ENCODE measurements at regions of chr3 and their contacts with region 1.

Region 1: DNA sequence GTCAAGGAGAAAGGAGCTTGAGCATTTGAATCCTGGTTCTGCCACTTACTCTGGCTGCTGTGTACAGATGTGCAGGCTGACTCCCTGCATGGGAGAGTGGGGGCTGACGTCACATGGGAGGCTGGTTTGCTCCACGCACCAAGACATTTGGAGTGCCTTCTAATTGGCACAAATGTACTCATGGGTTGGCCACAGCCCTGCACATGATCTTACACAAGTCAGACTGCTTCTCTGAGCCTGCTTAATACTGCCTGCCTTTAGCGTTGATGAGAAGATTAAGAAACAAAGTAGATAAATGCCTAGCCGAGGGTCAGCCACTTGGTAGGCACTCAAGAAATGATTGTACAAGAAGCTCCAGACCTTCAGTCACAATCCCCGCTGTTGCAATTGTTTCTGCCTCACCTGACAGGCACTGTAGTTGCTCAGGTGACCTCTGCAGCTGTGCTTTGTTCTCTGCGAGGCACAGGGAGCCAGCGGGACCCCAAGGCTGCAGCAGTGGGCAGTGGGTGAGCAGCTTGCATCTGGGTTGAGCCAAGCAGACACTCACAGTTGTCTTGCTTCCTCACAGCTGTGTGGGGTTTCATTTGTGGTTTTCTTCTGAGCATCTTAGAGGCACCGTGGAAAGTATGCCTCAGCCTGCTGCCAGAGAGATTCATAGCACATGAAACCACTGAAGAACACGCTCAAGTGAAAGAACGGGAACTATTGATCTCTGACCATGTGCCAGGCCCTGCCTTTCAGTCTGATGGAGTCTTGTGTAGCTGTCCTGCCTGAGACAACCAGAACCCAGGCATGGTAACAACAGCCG is 33.1 kb downstream of the GRK7 start:
- DNase-seq: peak; percentile 83
- H3K4me3 ChIP-seq: peak overlapping the region in 4 of 8 donors; percentile 7 to 68 (median 45)
- H3K27ac ChIP-seq: peak overlapping the region; percentile 78 to 91 (median 87)
- H3K4me1 ChIP-seq: peaks cover 18 to 52% (median 30%) of the 10 kb centered on the region in 6 donors
- H3K27me3 ChIP-seq: no peaks in the 10 kb centered on the region
- CTCF ChIP-seq: no peak
- POLR2A ChIP-seq: no peak

Region 2: DNA sequence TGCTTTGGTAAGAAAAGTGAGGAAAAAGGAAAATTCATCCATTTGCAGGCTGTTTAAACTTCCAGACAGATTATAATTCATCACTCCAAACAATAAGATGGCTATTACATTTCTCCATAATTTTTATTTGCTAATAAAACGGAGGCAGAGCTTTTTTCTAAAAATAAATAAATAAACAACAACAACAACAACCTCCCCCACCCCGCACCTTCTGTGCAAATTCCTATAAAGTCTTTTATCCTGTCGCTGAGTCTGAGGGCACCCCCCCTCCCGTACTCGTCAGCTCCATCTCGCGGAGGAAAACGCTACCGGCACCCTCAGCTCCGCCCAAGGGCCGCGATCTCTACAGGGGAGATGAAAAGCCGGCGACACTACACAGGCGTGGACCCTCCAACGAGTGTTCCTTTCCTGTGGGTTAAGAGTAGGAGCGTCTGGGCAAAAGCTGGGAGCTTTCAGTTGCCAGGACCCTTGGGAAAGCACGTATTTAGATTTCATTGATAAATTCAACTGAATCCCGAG is 79.1 kb after region 1 on chr3:
- intact Hi-C with region 1: loop called (anchors 10 kb)
- DNase-seq: peak; percentile 96
- H3K4me3 ChIP-seq: peak overlapping the region; percentile 58 to 97 (median 85)
- H3K27ac ChIP-seq: peak overlapping the region; percentile 94 to 100 (median 99)
- H3K4me1 ChIP-seq: peaks cover 19 to 43% (median 29%) of the 10 kb centered on the region in 6 donors
- H3K27me3 ChIP-seq: no peaks in the 10 kb centered on the region
- CTCF ChIP-seq: peak; percentile 70 to 95 (median 89)
- POLR2A ChIP-seq: no peak

Region 3: DNA sequence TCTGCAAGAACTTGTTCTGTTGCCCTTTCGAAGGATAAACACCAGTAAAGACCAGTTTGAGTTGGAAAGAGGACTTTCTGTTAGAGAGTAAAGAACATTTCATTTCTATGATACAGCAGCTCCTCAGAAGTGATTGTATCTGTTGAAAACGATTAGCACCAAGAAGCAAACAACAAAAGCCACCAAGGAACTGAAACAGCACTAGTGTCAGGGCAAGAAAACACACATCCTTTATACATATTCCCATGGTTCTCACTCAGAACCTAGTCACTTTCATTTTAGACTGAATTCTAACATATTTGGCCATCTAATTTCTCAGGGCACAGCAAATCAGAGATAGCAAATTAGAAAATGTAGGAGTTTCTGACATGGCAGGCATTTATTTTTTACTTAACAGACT is 196.2 kb after region 1 on chr3:
- intact Hi-C with region 1: no loop called
- DNase-seq: no peak
- H3K4me3 ChIP-seq: no peak overlapping the region
- H3K27ac ChIP-seq: no peak overlapping the region
- H3K4me1 ChIP-seq: no peaks in the 10 kb centered on the region
- H3K27me3 ChIP-seq: no peaks in the 10 kb centered on the region
- CTCF ChIP-seq: no peak
- POLR2A ChIP-seq: no peak

Measured in spleen (tissue), 13 donors.